ENCODE measurements at regions of chr5 and their contacts with region 1.

Region 1: DNA sequence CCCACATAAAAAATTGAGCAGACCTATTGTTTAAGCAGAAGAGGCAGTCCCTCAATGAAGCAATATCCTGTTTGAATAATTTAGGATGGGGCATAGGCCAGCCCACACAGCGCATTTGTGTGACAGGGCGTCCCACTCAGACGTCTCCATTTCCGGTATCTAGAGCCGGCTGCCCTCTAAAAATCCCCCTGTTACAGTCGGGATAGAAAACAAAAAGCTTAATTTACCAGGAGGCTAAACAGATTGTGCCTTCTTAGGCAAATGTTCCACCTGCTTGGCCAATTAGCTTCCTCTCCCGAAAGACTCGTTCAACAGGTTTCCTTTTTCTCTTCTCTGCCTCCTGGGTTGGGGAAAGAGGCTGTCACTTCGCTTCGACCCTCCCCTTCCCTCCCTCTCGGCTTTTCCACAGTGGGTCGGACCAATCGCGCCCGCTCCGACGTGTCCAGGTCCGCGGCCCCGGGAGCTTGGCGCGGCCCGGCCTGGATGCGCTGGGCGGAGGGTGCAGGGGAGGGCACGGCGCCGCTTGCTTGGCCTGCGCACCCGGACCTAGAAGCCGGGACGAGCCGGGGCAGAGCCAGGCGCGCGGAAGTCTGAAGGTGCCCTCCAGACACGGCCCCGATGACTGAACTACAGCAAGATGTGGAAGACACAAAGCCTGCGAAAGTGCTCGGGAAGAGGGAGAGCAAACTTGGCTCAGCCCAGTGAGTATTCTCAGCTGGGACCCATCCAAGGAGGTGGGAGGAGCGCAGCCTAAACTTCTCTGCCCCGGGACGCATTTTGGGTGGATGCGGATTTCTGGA is at the start of gene GRAMD2B:
- DNase-seq: peak; percentile 91
- ATAC-seq: peak; percentile 95
- H3K4me3 ChIP-seq: peak within 1 kb of the TSS; percentile 91
- H3K27ac ChIP-seq: peak within 1 kb of the TSS; percentile 76
- H3K4me1 ChIP-seq: peaks cover 25% of the 10 kb centered on the region
- H3K27me3 ChIP-seq: no peaks in the 10 kb centered on the region
- CTCF ChIP-seq: no peak
- total RNA-seq, gene GRAMD2B: 33.6 and 38.8 TPM in 2 replicates

Region 2: GRCh38 chr5:126370796-126371718 is 52.1 kb before region 1 on chr5:
- CTCF ChIA-PET with region 1: no interaction called
- POLR2A ChIA-PET with region 1: interaction called, 5 read pairs
- intact Hi-C with region 1: loop called (anchors 1 kb)
- DNase-seq: peak; percentile 83
- ATAC-seq: peak; percentile 80
- H3K4me3 ChIP-seq: peak overlapping the region; percentile 65
- H3K27ac ChIP-seq: peak overlapping the region; percentile 88
- H3K4me1 ChIP-seq: peaks cover 60% of the 10 kb centered on the region
- H3K27me3 ChIP-seq: no peaks in the 10 kb centered on the region
- CTCF ChIP-seq: 0 out of 2 replicates have a peak, but pooled peaks have one; percentile 20

Region 3: DNA sequence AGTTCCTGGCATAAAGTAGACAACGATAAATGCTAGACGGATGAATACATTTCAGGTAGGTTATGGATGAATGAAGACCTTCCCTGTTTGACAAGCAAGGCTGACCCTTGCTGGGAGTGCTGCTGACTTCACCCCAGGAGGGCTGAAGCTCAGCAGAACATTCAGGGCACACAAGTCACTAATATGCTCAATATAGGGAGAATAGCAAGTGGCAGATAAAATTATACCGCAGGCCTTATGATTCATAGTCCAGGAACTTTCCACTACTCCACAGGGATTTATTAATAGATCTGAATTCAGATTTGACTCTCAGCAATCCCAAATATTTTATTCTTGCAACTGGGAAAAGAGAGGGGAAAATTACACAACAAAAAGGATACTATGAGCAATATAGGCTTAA is 38.2 kb before region 1 on chr5:
- CTCF ChIA-PET with region 1: interaction called, 3 read pairs
- POLR2A ChIA-PET with region 1: interaction called, 5 read pairs
- intact Hi-C with region 1: loop called (anchors 2 kb)
- DNase-seq: peak; percentile 85
- ATAC-seq: peak; percentile 76
- H3K4me3 ChIP-seq: peak overlapping the region; percentile 41
- H3K27ac ChIP-seq: peak overlapping the region; percentile 80
- H3K4me1 ChIP-seq: peaks cover 44% of the 10 kb centered on the region
- H3K27me3 ChIP-seq: no peaks in the 10 kb centered on the region
- CTCF ChIP-seq: no peak

Region 4: DNA sequence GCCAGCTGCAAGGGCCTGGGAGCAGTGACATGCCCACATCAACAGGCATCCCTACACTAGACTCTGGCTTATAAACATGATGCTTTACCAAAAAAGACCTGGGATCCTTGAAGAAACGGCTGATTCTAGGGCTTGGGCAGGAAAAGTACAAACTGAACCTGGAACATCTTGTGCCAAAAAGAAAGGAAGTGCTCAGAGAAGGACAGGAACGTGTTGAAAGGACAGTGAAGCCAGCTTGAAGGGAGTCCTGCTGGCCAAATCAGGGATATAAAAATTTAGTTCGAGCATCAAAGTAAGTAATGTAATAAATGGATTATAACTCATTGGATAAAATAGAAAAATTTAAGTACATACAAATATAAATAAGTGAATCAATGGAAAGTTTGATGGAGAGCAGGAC is 113.7 kb after region 1 on chr5:
- CTCF ChIA-PET with region 1: interaction called, 7 read pairs
- POLR2A ChIA-PET with region 1: interaction called, 5 read pairs
- intact Hi-C with region 1: loop called (anchors 2 kb)
- DNase-seq: no peak
- ATAC-seq: no peak
- H3K4me3 ChIP-seq: no peak overlapping the region
- H3K27ac ChIP-seq: no peak overlapping the region
- H3K4me1 ChIP-seq: peaks cover 8% of the 10 kb centered on the region
- H3K27me3 ChIP-seq: no peaks in the 10 kb centered on the region
- CTCF ChIP-seq: no peak

Region 5: GRCh38 chr5:126594676-126595485 is 171.7 kb after region 1 on chr5 and contains the start of gene ALDH7A1:
- CTCF ChIA-PET with region 1: no interaction called
- POLR2A ChIA-PET with region 1: no interaction called
- intact Hi-C with region 1: loop called (anchors 10 kb)
- DNase-seq: peak; percentile 91
- ATAC-seq: peak; percentile 81
- H3K4me3 ChIP-seq: peak within 1 kb of the TSS; percentile 76
- H3K27ac ChIP-seq: peak within 1 kb of the TSS; percentile 49
- H3K4me1 ChIP-seq: peaks cover 18% of the 10 kb centered on the region
- H3K27me3 ChIP-seq: no peaks in the 10 kb centered on the region
- CTCF ChIP-seq: peak; percentile 59
- total RNA-seq, gene ALDH7A1: 45.8 and 45.9 TPM in 2 replicates